Dendritic cell treated with granulocyte-macrophage colony-stimulating factor and Interleukin-4, amounts not matched to agents 40 ng/mL and 50 ng/mL, for 4 days (primary cell): ENCODE measurements at regions of chr15 and their contacts with region 1.

Region 1: GRCh38 chr15:83673385-83673784 is 19.5 kb downstream of the ADAMTSL3 start:
- H3K4me3 Mint-ChIP-seq: no peak overlapping the region
- H3K27ac Mint-ChIP-seq: no peak overlapping the region
- H3K4me1 Mint-ChIP-seq: no peaks in the 10 kb centered on the region
- H3K27me3 Mint-ChIP-seq: no peaks in the 10 kb centered on the region

Region 2: DNA sequence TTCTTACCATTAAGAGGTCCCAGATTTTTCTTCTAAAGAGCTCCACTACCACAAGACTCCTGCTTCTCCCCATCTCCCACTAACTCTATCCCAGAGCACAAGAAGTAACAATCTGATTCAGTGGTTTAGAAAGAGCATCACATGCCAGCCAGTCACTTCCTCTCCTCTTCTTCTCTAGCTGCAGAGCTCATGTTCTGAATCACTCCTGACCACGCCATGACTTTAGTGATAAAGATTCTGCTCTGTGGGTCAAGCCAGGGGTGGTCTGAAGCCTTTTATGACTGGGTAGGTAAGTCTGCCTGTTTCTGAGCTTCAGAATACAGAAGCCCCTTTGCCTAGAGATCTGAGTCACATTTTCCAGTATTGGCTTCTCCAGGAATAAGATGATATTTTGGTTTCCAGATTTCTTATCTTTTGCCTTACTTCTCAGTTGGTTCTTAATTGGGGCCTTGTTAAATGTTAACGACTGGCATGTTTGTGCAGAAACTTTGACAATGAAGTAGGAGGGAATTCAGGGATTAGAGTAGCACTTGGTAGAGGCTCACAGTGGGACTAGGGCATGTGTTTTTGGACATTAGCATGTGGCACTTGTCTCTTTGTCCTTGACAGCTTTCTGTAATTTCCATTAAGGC is 47.1 kb before region 1 on chr15:
- intact Hi-C with region 1: loop called (anchors 10 kb)
- H3K4me3 Mint-ChIP-seq: no peak overlapping the region
- H3K27ac Mint-ChIP-seq: no peak overlapping the region
- H3K4me1 Mint-ChIP-seq: no peaks in the 10 kb centered on the region
- H3K27me3 Mint-ChIP-seq: no peaks in the 10 kb centered on the region

Region 3: DNA sequence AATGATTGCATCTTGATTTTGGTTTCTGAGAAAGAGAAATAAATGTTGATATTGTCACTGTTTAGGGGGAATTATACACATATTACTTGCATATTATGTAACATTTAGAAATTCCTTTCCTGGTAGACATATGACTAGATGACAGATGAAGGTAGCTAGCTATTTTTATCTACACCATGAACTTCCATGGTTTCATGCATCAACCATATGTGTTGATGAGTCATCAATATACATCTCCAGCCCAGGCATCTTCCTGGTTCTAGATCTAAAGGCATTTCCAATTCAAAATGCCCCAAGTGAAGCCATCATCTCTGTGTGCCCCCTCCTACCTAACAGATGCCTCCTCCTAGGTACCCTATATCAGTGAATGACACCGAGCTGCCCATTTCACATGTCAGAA is 28.9 kb before region 1 on chr15:
- intact Hi-C with region 1: no loop called
- H3K4me3 Mint-ChIP-seq: no peak overlapping the region
- H3K27ac Mint-ChIP-seq: no peak overlapping the region
- H3K4me1 Mint-ChIP-seq: no peaks in the 10 kb centered on the region
- H3K27me3 Mint-ChIP-seq: no peaks in the 10 kb centered on the region

Region 4: DNA sequence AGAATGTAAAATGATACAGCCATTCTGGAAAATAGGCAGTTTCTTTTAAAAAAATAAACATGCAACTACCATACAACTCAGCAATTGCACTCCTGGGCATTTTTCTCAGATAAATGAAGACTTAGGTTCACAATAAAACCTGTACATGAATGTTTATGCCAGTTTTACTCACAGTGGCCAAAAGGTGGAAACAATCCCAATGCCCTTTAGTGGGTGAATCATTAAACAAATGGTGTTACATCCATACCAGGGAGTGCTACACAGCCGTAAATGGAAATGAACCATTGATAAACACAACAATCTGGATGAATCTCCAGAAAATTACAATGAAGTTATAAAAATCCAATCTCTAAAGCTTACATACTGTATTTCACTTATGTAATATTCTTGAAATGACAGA is 120.8 kb after region 1 on chr15:
- intact Hi-C with region 1: no loop called
- H3K4me3 Mint-ChIP-seq: no peak overlapping the region
- H3K27ac Mint-ChIP-seq: no peak overlapping the region
- H3K4me1 Mint-ChIP-seq: no peaks in the 10 kb centered on the region
- H3K27me3 Mint-ChIP-seq: no peaks in the 10 kb centered on the region